Activated T-helper 1 cell treated with anti-CD3 and anti-CD28 coated beads, Interleukin-12 subunit alpha, Interleukin-12 subunit beta, Interleukin-2, Interleukin-4 antibody, amounts not matched to agents 30 ng/mL and 10 ng/mL and 1 ng/mL, durations not matched to agents 14 hours and 24 hours and 36 hours (primary cell): ENCODE measurements at regions of chr6 and their contacts with region 1.

Region 1: DNA sequence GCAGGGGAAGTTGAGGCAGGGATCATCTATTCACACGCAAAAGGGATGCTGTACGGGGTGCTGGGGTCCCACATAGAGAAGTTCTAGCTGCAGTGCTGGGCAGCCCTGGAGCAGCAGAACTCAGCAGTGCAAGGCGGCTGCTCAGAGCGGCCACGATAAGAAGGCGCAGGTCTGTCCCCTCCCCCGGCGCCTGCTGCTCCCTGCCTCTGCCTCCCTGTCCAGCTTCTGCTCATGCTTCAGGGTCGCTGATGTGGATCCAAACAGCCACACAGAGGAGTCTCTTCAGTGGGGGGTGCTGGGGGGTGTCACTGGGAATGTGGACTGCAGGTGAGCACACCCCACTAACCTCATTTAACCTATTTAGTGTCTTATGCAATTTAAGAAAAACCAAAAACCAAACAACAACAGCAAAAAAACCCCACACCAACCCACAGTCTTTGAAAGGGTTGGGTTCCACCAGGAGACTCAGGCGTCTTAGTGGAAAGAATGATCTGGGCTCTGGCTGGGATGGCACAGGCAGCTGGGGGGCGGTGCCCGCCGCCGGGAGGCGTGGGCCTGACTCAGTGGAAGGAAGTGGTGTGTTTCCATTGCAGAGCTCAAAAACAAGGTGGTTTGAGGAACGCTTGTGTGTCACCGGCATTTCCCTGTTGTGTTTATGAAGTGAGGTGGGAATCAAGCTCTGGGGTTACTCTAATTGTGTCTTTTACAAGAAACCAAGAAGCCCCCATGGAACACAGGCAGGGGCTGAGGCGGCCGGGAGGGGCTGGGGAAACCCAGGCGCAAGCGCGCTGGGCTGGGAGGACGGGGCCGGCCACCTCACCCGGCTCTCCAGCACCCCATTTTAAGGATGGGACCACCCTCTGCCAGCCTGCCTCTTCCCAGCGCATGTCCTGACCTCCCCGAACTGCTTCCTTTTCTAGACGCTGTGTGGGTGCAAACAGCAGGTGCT is 55.1 kb downstream of the IRF4 start:
- DNase-seq: peak; percentile 92
- H3K4me3 Mint-ChIP-seq: peak overlapping the region; percentile 63
- H3K27ac Mint-ChIP-seq: peak overlapping the region; percentile 98
- H3K4me1 Mint-ChIP-seq: peaks cover 59% of the 10 kb centered on the region
- H3K27me3 Mint-ChIP-seq: peaks cover 2% of the 10 kb centered on the region

Region 2: GRCh38 chr6:225121-225721 is 221.5 kb before region 1 on chr6:
- intact Hi-C with region 1: loop called (anchors 1 kb)
- DNase-seq: peak; percentile 63
- H3K4me3 Mint-ChIP-seq: peak overlapping the region; percentile 65
- H3K27ac Mint-ChIP-seq: peak overlapping the region; percentile 96
- H3K4me1 Mint-ChIP-seq: peaks cover 89% of the 10 kb centered on the region
- H3K27me3 Mint-ChIP-seq: no peaks in the 10 kb centered on the region

Region 3: GRCh38 chr6:391559-392440 is 54.9 kb before region 1 on chr6 and contains the start of gene IRF4:
- intact Hi-C with region 1: loop called (anchors 1 kb)
- DNase-seq: peak; percentile 69
- H3K4me3 Mint-ChIP-seq: peak within 1 kb of the TSS; percentile 98
- H3K27ac Mint-ChIP-seq: peak within 1 kb of the TSS; percentile 98
- H3K4me1 Mint-ChIP-seq: peaks cover 41% of the 10 kb centered on the region
- H3K27me3 Mint-ChIP-seq: peaks cover 3% of the 10 kb centered on the region
- total RNA-seq, gene IRF4: 911 and 929 TPM in 2 replicates

Region 4: GRCh38 chr6:422433-423054 is 24.1 kb before region 1 on chr6:
- intact Hi-C with region 1: loop called (anchors 1 kb)
- DNase-seq: peak; percentile 67
- H3K4me3 Mint-ChIP-seq: no peak overlapping the region
- H3K27ac Mint-ChIP-seq: peak overlapping the region; percentile 52
- H3K4me1 Mint-ChIP-seq: peaks cover 39% of the 10 kb centered on the region
- H3K27me3 Mint-ChIP-seq: no peaks in the 10 kb centered on the region

Region 5: DNA sequence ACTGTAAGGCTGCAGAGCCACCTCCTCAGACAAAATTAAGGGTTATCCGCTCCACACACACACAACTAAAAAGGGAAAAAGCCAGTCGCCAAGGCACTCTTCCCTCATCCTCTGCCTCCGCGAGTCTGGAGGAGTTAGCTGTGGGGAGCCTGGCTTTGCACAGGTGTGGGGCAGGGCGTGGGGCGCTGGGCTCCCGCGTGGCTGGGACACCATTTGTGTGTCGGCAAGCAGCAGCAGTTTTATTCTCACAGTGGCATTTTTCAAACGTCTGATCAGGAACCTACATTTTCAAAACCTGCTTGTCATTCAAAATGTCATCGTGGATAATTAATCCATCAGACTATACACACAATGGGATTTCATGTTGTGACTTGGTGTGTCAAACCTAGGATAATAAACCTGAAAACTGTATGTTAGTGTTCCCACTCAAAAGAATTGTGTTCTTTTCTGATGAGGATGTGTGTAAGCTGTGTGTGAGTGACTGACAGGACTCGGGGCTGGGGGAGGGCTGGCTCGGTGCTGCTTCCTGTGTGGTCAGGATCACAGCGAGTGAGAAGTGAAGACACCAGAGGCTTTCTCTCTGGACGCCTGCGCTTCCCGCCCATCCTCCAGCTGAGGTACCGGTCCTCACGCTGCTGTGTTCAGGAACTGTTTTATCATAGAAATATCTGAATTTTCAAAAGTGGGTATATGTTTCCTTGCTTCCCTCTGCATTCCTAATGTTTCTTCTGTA is 27.9 kb after region 1 on chr6:
- intact Hi-C with region 1: loop called (anchors 1 kb)
- DNase-seq: peak; percentile 75
- H3K4me3 Mint-ChIP-seq: peak overlapping the region; percentile 72
- H3K27ac Mint-ChIP-seq: peak overlapping the region; percentile 86
- H3K4me1 Mint-ChIP-seq: peaks cover 75% of the 10 kb centered on the region
- H3K27me3 Mint-ChIP-seq: no peaks in the 10 kb centered on the region

Region 6: DNA sequence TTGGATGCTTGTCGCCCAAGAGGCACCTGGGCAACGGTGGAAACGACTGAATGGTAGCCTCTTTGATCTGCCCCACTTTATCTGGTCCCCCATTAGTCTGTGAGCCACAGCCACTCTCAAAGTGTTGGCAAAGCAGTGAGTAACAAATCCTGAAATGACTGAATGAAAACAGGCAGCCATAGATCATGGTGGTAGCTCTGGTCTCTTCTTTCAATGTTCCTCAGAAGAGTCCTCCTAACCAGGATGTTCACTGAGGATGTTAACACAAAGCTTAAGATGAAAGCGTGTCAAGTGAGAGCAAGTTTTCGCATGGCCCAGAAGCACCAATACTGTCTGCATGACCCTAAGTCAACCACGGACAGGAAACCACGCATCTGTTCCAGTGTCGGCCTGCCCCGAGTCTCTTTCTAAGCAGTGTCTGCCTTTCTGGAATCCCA is 52.1 kb after region 1 on chr6:
- intact Hi-C with region 1: loop called (anchors 1 kb)
- DNase-seq: peak; percentile 56
- H3K4me3 Mint-ChIP-seq: peak overlapping the region; percentile 80
- H3K27ac Mint-ChIP-seq: peak overlapping the region; percentile 94
- H3K4me1 Mint-ChIP-seq: peaks cover 87% of the 10 kb centered on the region
- H3K27me3 Mint-ChIP-seq: no peaks in the 10 kb centered on the region

Region 7: GRCh38 chr6:548517-548916 is 101.8 kb after region 1 on chr6:
- intact Hi-C with region 1: loop called (anchors 1 kb)
- DNase-seq: peak; percentile 43
- H3K4me3 Mint-ChIP-seq: peak overlapping the region; percentile 72
- H3K27ac Mint-ChIP-seq: peak overlapping the region; percentile 95
- H3K4me1 Mint-ChIP-seq: peaks cover 75% of the 10 kb centered on the region
- H3K27me3 Mint-ChIP-seq: no peaks in the 10 kb centered on the region